Sciatic nerve (tissue), 2 donors: ENCODE measurements at regions of chr7 and their contacts with region 1.

Region 1: GRCh38 chr7:120927454-120928103 is 23.0 kb upstream of the ING3 start:
- DNase-seq: no peak
- ATAC-seq: no peak

Region 2: DNA sequence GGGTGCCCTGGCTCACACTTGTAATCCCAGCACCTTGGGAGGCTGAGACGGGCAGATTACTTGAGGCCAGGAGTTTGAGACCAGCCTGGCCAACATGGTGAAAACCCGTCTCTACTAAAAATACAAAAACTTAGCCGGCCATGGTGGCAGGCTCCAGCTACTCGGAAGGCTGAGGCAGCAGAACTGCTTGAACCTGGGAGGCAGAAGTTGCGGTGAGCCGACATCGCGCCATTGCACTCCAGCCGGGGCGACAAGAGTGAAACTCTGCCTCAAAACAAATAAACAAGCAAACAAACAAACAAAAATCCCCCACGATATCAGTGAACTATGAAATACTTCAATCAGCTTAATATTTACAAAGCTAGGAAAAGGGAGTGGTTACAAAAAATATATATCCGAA is 1036.9 kb before region 1 on chr7:
- intact Hi-C with region 1: loop called (anchors 5 kb)
- DNase-seq: no peak
- ATAC-seq: no peak

Region 3: GRCh38 chr7:121410829-121411596 is 483.4 kb after region 1 on chr7:
- intact Hi-C with region 1: no loop called
- DNase-seq: no peak
- ATAC-seq: no peak